Common myeloid progenitor, CD34-positive (primary cell): ENCODE measurements at regions of chr2 and their contacts with region 1.

Region 1: DNA sequence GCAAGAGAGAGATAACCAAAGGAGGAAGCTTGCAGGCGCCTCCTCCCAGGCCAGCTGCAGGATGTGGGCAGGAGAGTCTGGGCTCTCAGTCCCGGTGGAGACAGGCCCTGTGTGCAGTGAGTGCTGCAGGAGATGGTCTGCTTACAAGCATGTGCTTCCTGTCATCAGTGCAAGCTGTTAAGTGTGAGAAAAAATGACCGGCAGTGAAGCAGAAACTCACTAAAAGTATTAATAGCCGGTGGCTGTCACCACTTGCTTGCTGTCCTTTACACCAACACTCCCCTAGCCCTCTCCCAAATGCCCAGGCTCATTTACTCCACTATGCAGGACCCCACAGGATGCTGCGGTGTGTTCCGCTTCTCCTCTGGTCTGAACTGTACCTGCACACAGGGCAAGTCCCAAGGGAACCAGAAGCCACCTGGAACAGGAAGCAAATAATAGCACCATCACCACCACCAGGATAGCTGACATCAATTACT is 435.6 kb upstream of the HS6ST1 start:
- DNase-seq: peak; percentile 77 to 98 (median 96)
- H3K4me3 ChIP-seq: peak overlapping the region in 3 of 7 experiments; percentile 15 to 48 (median 29)
- H3K27ac ChIP-seq: no peak overlapping the region
- H3K4me1 ChIP-seq: peaks cover 13 to 45% (median 27%) of the 10 kb centered on the region in 4 experiments
- H3K27me3 ChIP-seq: no peaks in the 10 kb centered on the region

Region 2: GRCh38 chr2:128635361-128635900 is 118.9 kb before region 1 on chr2:
- CTCF ChIA-PET with region 1: interaction called, 10 read pairs
- POLR2A ChIA-PET with region 1: no interaction called
- DNase-seq: peak in 2 of 3 donors; percentile 23 to 33
- H3K4me3 ChIP-seq: no peak overlapping the region
- H3K27ac ChIP-seq: no peak overlapping the region
- H3K4me1 ChIP-seq: peaks cover 6 to 39% (median 26%) of the 10 kb centered on the region in 4 experiments
- H3K27me3 ChIP-seq: no peaks in the 10 kb centered on the region

Region 3: GRCh38 chr2:128714851-128715312 is 39.4 kb before region 1 on chr2:
- CTCF ChIA-PET with region 1: interaction called, 10 read pairs
- POLR2A ChIA-PET with region 1: no interaction called
- DNase-seq: peak; percentile 39 to 86 (median 82)
- H3K4me3 ChIP-seq: no peak overlapping the region
- H3K27ac ChIP-seq: peak overlapping the region in 1 of 2 experiments; percentile 20
- H3K4me1 ChIP-seq: peaks cover 12 to 58% (median 52%) of the 10 kb centered on the region in 4 experiments
- H3K27me3 ChIP-seq: no peaks in the 10 kb centered on the region

Region 4: GRCh38 chr2:129396980-129397599 is 642.8 kb after region 1 on chr2:
- CTCF ChIA-PET with region 1: no interaction called
- POLR2A ChIA-PET with region 1: no interaction called
- DNase-seq: peak; percentile 23 to 73 (median 67)
- H3K4me3 ChIP-seq: no peak overlapping the region
- H3K27ac ChIP-seq: no peak overlapping the region
- H3K4me1 ChIP-seq: no peaks in the 10 kb centered on the region
- H3K27me3 ChIP-seq: no peaks in the 10 kb centered on the region